B cell (primary cell): ENCODE measurements at regions of chr13 and their contacts with region 1.

Region 1: DNA sequence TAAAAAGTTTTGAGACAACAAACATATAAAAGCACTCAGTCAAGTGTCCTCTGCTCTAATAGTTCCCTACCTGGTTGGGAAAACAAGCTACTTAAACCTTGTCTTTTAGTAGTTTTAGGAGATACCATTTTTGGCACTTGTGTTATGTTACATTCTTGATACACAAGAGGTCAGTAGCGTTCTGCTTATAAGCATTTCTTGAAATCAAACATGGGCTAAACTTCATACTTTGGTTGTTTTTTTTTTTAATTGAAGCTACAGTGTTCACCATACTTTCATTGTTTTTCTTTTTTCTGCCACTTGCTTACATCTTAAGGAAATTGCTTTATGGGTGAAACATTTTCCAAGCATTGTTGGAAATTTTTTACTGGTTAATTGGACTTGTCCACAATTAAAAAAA is 12.9 kb downstream of the NHLRC3 start:
- DNase-seq: peak; percentile 29
- ATAC-seq: no peak
- H3K4me3 ChIP-seq: no peak overlapping the region
- H3K4me3 Mint-ChIP-seq: no peak overlapping the region
- H3K27ac ChIP-seq: no peak overlapping the region
- H3K27ac Mint-ChIP-seq: no peak overlapping the region
- H3K4me1 ChIP-seq: no peaks in the 10 kb centered on the region
- H3K4me1 Mint-ChIP-seq: peaks cover 5% of the 10 kb centered on the region
- H3K27me3 ChIP-seq: no peaks in the 10 kb centered on the region
- H3K27me3 Mint-ChIP-seq: no peaks in the 10 kb centered on the region
- CTCF ChIP-seq: peak; percentile 60

Region 2: GRCh38 chr13:39676315-39676876 is 625.2 kb after region 1 on chr13:
- CTCF ChIA-PET with region 1: no interaction called
- POLR2A ChIA-PET with region 1: no interaction called
- intact Hi-C with region 1: loop called (anchors 1 kb)
- DNase-seq: peak; percentile 58
- ATAC-seq: no peak
- H3K4me3 ChIP-seq: no peak overlapping the region
- H3K4me3 Mint-ChIP-seq: no peak overlapping the region
- H3K27ac ChIP-seq: no peak overlapping the region
- H3K27ac Mint-ChIP-seq: no peak overlapping the region
- H3K4me1 ChIP-seq: no peaks in the 10 kb centered on the region
- H3K4me1 Mint-ChIP-seq: peaks cover 6% of the 10 kb centered on the region
- H3K27me3 ChIP-seq: no peaks in the 10 kb centered on the region
- H3K27me3 Mint-ChIP-seq: no peaks in the 10 kb centered on the region
- CTCF ChIP-seq: peak; percentile 75